Caco-2 (cell line): ENCODE measurements at regions of chr14 and their contacts with region 1.

Region 1: GRCh38 chr14:24838945-24839616 is 205.1 kb upstream of the GZMB start:
- DNase-seq: peak in 1 of 2 experiments; percentile 36
- H3K4me3 ChIP-seq: no peak overlapping the region
- H3K4me3 Mint-ChIP-seq: peak overlapping the region; percentile 49
- H3K27ac Mint-ChIP-seq: peak overlapping the region; percentile 82
- H3K4me1 ChIP-seq: peaks cover 61% of the 10 kb centered on the region
- H3K4me1 Mint-ChIP-seq: peaks cover 36% of the 10 kb centered on the region
- H3K27me3 ChIP-seq: no peaks in the 10 kb centered on the region
- H3K27me3 Mint-ChIP-seq: no peaks in the 10 kb centered on the region
- CTCF ChIP-seq: no peak

Region 2: DNA sequence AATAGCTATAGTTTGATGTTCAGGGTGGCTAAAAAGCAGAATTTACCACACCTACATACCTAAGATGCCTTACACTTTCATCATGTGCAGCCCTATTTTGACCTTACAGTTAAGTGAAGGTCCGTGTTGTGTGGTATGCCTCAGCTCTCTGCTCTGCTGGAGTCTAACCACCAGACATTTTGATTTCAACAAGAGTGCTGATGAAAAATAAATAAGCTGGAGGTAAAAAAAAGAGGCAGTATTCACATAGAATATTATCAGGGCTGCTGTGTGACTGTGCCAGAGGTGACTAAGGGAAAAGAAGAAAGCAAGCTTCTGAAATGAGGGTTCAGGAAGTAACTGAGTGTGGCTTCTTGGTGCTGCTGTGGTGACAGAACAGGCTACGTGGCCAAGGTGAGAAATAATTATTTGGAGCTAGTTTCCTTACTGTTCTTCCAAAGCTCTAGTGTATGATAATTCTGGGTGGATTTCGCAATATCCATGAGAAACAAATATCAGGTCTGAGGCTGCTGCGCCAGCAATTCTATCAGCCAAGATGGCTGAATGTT is 22.1 kb after region 1 on chr14:
- CTCF ChIA-PET with region 1: interaction called, 3 read pairs
- POLR2A ChIA-PET with region 1: interaction called, 4 read pairs
- intact Hi-C with region 1: loop called (anchors 2 kb)
- DNase-seq: peak; percentile 52 to 53
- H3K4me3 ChIP-seq: 0 out of 2 replicates have a peak overlapping the region, but pooled peaks have one; percentile 2
- H3K4me3 Mint-ChIP-seq: peak overlapping the region; percentile 74
- H3K27ac Mint-ChIP-seq: peak overlapping the region; percentile 97
- H3K4me1 ChIP-seq: peaks cover 36% of the 10 kb centered on the region
- H3K4me1 Mint-ChIP-seq: peaks cover 29% of the 10 kb centered on the region
- H3K27me3 ChIP-seq: no peaks in the 10 kb centered on the region
- H3K27me3 Mint-ChIP-seq: no peaks in the 10 kb centered on the region
- CTCF ChIP-seq: no peak